Calu3 (cell line): ENCODE measurements at regions of chr4 and their contacts with region 1.

Region 1: GRCh38 chr4:77538560-77539157 is 67.0 kb upstream of the CXCL13 start:
- DNase-seq: peak; percentile 62
- H3K4me3 Mint-ChIP-seq: peak overlapping the region; percentile 47
- H3K27ac Mint-ChIP-seq: peak overlapping the region; percentile 83
- H3K4me1 Mint-ChIP-seq: peaks cover 16% of the 10 kb centered on the region
- H3K27me3 Mint-ChIP-seq: no peaks in the 10 kb centered on the region
- CTCF ChIP-seq: no peak

Region 2: GRCh38 chr4:77473509-77473908 is 65.2 kb before region 1 on chr4:
- CTCF ChIA-PET with region 1: no interaction called
- intact Hi-C with region 1: loop called (anchors 2 kb)
- DNase-seq: peak; percentile 6
- H3K4me3 Mint-ChIP-seq: no peak overlapping the region
- H3K27ac Mint-ChIP-seq: no peak overlapping the region
- H3K4me1 Mint-ChIP-seq: no peaks in the 10 kb centered on the region
- H3K27me3 Mint-ChIP-seq: peaks cover 37% of the 10 kb centered on the region
- CTCF ChIP-seq: peak; percentile 33

Region 3: DNA sequence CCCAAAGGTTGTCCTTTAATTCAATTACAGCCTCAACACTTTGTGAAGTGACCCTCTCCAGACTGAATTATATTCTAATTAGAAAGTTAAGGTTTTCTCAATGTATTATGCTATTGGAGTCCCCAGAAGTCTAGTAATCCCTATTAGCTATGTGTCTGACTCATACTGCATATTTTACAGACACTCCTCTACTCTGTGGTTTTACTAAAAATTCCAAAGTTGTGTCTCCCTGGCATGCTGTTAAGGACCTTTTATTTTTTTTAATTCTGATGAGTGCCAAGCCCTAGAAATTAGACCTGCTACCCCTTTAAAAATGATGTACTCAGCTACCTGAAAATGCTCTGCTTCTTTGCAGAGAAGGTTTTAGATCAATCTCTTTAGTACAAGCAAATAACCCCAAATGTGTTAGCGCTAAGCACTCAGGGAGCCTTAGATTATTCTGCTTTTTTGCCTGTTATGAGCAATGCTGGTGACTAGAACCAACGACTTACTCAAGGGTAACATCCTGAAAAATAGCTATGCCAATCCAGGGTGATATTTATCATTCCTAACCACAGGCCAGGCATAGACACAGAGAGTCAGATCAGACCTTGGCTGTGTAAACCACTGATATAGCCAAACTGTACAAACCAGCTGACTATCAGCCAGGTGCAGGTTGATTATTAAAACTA is 40.9 kb after region 1 on chr4:
- CTCF ChIA-PET with region 1: interaction called, 5 read pairs
- intact Hi-C with region 1: loop called (anchors 5 kb)
- DNase-seq: no peak
- H3K4me3 Mint-ChIP-seq: no peak overlapping the region
- H3K27ac Mint-ChIP-seq: no peak overlapping the region
- H3K4me1 Mint-ChIP-seq: peaks cover 31% of the 10 kb centered on the region
- H3K27me3 Mint-ChIP-seq: no peaks in the 10 kb centered on the region
- CTCF ChIP-seq: no peak

Region 4: GRCh38 chr4:78601013-78601412 is 1062.4 kb after region 1 on chr4:
- CTCF ChIA-PET with region 1: no interaction called
- intact Hi-C with region 1: no loop called
- DNase-seq: no peak
- H3K4me3 Mint-ChIP-seq: no peak overlapping the region
- H3K27ac Mint-ChIP-seq: no peak overlapping the region
- H3K4me1 Mint-ChIP-seq: peaks cover 3% of the 10 kb centered on the region
- H3K27me3 Mint-ChIP-seq: no peaks in the 10 kb centered on the region
- CTCF ChIP-seq: no peak